ENCODE measurements at regions of chr3 and their contacts with region 1.

Region 1: DNA sequence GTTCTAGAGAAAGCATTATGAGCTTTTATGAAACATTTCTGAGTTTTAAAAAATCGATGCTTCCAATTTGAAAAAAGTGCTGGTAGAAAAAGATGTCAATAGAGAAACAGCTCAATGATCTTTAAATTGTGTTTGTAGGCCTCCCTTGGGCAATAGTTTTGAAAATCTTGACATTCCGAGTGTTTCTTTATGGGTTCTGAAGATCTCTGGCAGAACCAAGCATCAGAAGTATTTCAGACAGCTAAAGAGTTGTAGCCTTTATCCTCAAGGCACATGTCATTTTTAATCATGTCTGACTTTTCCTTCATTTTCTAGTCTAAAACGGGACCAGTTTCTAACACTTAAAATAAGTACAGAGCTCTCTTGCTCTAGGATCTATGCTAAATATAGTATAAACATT is 188.1 kb upstream of the CBLB start:
- DNase-seq: no peak
- CTCF ChIP-seq: no peak

Region 2: GRCh38 chr3:106034313-106034712 is 22.6 kb before region 1 on chr3:
- CTCF ChIA-PET with region 1: interaction called, 12 read pairs
- POLR2A ChIA-PET with region 1: no interaction called
- DNase-seq: no peak
- CTCF ChIP-seq: no peak